A673 (cell line): ENCODE measurements at regions of chr15 and their contacts with region 1.

Region 1: DNA sequence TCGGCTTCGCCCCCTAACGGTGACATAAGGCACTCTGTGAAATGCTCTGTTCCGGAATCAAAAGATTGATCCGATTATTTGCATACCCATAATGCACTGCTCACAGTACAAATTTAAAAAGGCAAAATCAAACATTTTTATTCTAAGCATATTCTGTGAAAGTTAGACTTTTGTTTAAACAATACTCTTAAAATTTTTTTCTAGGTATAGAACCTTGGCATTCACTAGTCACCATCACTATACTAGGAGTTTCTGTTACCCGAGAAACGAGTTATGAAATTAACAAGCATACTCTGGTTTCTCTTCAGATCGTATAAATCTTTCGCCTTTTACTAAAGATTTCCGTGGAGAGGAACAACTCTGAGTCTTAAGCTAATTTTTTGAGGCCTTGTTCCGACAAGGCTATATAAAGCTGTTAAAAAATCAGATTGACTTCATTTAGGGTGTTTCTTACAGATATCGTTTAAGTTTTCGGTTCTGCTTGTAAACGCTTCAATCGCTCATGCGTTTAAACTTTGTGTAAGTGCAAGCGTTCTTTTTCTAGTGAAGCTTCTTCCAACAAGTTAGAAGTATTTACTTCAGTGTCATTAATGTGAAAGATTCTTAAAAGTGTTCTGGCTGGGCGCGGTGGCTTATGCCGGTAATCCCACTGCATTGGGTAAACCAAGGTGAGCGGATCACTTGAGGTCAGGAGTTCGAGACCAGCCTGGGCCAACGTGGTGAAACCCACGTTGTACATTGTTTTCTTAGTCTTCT is at the start of gene RNU5B-1:
- DNase-seq: peak; percentile 98
- H3K4me3 ChIP-seq: peak within 1 kb of the TSS; percentile 46
- H3K27ac ChIP-seq: peak within 1 kb of the TSS; percentile 99
- H3K4me1 ChIP-seq: peaks cover 10% of the 10 kb centered on the region
- H3K27me3 ChIP-seq: no peaks in the 10 kb centered on the region
- CTCF ChIP-seq: peak; percentile 96; the same call in 1 of the 2 replicates
- total RNA-seq, gene RNU5B-1: not detected in 2 replicates

Region 2: GRCh38 chr15:65292938-65293518 is 11.5 kb before region 1 on chr15:
- CTCF ChIA-PET with region 1: no interaction called
- POLR2A ChIA-PET with region 1: interaction called, 9 read pairs
- intact Hi-C with region 1: loop called (anchors 1 kb)
- DNase-seq: no peak
- H3K4me3 ChIP-seq: no peak overlapping the region
- H3K27ac ChIP-seq: no peak overlapping the region
- H3K4me1 ChIP-seq: peaks cover 4% of the 10 kb centered on the region
- H3K27me3 ChIP-seq: no peaks in the 10 kb centered on the region
- CTCF ChIP-seq: no peak

Region 3: GRCh38 chr15:65682404-65682911 is 377.9 kb after region 1 on chr15:
- CTCF ChIA-PET with region 1: no interaction called
- POLR2A ChIA-PET with region 1: no interaction called
- intact Hi-C with region 1: no loop called
- DNase-seq: no peak
- H3K4me3 ChIP-seq: no peak overlapping the region
- H3K27ac ChIP-seq: no peak overlapping the region
- H3K4me1 ChIP-seq: no peaks in the 10 kb centered on the region
- H3K27me3 ChIP-seq: no peaks in the 10 kb centered on the region
- CTCF ChIP-seq: no peak

Region 4: GRCh38 chr15:66619151-66619903 is 1314.8 kb after region 1 on chr15:
- CTCF ChIA-PET with region 1: interaction called, 11 read pairs
- POLR2A ChIA-PET with region 1: no interaction called
- intact Hi-C with region 1: no loop called
- DNase-seq: peak; percentile 69
- H3K4me3 ChIP-seq: no peak overlapping the region
- H3K27ac ChIP-seq: no peak overlapping the region
- H3K4me1 ChIP-seq: peaks cover 31% of the 10 kb centered on the region
- H3K27me3 ChIP-seq: no peaks in the 10 kb centered on the region
- CTCF ChIP-seq: peak; percentile 84